ENCODE measurements at regions of chr13 and their contacts with region 1.

Region 1: DNA sequence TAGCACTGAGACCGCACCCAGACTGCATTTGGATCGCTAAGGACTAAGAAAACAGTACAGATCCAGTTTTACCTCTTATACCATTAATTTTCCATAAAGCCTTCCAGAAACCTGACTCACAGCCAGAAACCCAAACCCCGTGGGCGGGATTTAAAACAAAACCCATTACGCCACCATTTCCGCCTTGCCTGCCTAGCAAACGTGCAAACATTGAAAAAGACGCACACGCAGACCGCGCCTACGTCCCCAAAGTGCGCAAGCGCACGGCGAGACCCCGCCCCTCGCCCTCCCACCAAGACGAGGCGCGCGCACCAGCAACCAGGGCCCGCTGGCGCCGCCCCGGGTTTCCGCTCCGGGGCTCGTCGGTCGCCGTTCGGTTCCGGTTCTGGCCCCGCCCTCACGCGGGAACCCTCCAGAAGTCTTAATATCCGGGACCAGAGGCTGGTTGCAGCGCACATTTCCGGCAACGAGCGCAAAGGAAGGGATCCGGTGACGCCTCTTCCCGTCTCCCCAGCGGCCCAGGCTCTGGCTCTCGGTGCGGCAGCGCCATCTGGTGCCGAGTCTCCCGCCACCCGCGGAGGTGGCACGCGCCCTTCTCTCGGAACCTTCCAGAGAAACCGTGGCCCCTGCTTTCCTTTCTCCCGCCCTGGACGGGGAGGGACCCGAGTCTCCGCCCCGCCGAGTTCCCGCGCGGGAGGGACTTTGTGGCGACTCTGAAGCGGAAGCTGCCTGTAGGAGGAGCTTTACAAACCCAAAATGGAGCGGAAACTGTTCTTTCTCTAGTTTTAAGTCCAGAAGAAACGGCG is 256.9 kb upstream of the STARD13 start:
- DNase-seq: peak; percentile 98
- H3K4me3 Mint-ChIP-seq: peak overlapping the region; percentile 80
- H3K27ac Mint-ChIP-seq: peak overlapping the region; percentile 98
- H3K4me1 Mint-ChIP-seq: peaks cover 42% of the 10 kb centered on the region
- H3K27me3 Mint-ChIP-seq: no peaks in the 10 kb centered on the region

Region 2: GRCh38 chr13:32538621-32539246 is 1003.8 kb before region 1 on chr13 and contains the start of gene N4BP2L2:
- intact Hi-C with region 1: loop called (anchors 2 kb)
- DNase-seq: peak; percentile 88
- H3K4me3 Mint-ChIP-seq: peak within 1 kb of the TSS; percentile 93
- H3K27ac Mint-ChIP-seq: peak within 1 kb of the TSS; percentile 98
- H3K4me1 Mint-ChIP-seq: peaks cover 36% of the 10 kb centered on the region
- H3K27me3 Mint-ChIP-seq: no peaks in the 10 kb centered on the region
- total RNA-seq, gene N4BP2L2: 94.3 and 105 TPM in 2 replicates

Region 3: GRCh38 chr13:32905063-32905863 is 637.2 kb before region 1 on chr13:
- intact Hi-C with region 1: loop called (anchors 1 kb)
- DNase-seq: peak; percentile 26
- H3K4me3 Mint-ChIP-seq: peak overlapping the region; percentile 71
- H3K27ac Mint-ChIP-seq: peak overlapping the region; percentile 86
- H3K4me1 Mint-ChIP-seq: peaks cover 35% of the 10 kb centered on the region
- H3K27me3 Mint-ChIP-seq: peaks cover 5% of the 10 kb centered on the region

Region 4: GRCh38 chr13:33146843-33147611 is 395.5 kb before region 1 on chr13:
- intact Hi-C with region 1: loop called (anchors 2 kb)
- DNase-seq: no peak
- H3K4me3 Mint-ChIP-seq: no peak overlapping the region
- H3K27ac Mint-ChIP-seq: peak overlapping the region; percentile 74
- H3K4me1 Mint-ChIP-seq: peaks cover 15% of the 10 kb centered on the region
- H3K27me3 Mint-ChIP-seq: no peaks in the 10 kb centered on the region

Region 5: DNA sequence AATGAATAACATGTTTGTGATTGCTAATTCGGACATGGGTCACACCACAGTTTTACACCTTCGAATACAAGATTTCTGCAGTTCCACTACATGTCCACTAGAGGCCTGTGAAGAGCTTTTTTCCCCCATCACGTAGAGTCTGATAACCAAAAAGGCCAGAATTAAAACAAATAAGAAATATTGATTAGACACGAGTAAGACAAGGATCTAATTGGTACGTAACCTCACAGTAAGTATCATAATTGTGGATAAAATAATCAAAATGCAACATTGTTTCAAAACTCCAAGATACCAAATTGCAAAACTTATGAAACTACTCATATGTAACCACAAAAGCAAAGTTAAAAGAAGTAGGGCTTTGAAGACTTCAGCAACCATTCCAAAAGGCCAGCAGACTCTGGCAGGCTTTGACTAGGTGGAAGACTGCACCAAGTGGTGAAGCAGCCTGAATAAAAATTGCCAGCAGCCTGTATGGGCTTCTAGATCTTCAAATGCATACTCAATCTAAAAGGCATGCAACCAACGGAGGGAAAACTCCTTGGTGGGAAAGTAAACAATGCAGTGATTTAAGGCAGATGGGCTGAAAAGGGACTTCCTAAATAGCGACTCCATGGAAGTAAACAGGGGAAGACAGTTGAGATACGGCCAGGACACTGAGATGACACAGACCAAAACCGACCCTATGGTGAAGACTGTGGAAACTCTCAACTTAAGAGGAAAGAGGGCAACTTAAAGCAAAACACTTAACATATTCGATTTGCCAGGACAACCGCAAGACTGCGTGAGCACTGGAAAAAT is 313.6 kb before region 1 on chr13:
- intact Hi-C with region 1: loop called (anchors 1 kb)
- DNase-seq: no peak
- H3K4me3 Mint-ChIP-seq: no peak overlapping the region
- H3K27ac Mint-ChIP-seq: no peak overlapping the region
- H3K4me1 Mint-ChIP-seq: peaks cover 6% of the 10 kb centered on the region
- H3K27me3 Mint-ChIP-seq: no peaks in the 10 kb centered on the region

Region 6: DNA sequence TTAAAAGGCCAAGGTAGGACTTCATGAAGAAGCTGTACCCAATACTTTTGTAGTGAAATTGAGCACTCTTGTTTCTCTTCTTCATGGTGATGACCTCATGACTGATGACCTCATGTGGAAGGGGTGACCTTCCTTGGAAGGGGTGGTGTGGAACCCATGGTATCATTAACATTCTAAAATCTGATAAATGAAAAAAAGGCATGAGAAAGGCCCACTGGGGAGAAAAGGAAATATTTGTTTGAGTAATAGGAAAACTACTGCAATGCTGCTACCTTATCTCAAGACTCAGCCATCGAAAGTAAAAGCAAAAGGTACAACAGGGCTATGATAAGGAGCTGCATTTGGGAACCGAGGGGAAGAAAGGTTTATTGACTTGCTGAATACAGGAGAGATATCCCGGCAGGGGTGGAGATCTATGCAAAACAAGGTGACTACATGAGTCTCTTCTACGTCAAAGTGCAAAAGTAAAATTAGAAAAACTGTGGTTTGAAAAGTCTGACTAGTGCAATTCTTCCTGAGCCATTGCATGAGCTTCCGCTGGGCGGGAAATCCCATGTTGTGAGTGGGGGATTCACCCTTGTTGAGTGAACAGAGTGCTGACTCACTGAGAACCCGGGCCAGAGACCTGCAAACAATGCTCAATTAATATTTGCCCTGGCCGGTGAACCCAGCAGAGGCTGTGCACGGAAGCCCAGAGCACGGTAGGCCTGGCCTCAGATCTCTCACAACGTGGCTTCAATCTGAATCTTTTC is 136.6 kb after region 1 on chr13:
- intact Hi-C with region 1: loop called (anchors 1 kb)
- DNase-seq: peak; percentile 53
- H3K4me3 Mint-ChIP-seq: peak overlapping the region; percentile 76
- H3K27ac Mint-ChIP-seq: peak overlapping the region; percentile 91
- H3K4me1 Mint-ChIP-seq: peaks cover 46% of the 10 kb centered on the region
- H3K27me3 Mint-ChIP-seq: no peaks in the 10 kb centered on the region

Region 7: DNA sequence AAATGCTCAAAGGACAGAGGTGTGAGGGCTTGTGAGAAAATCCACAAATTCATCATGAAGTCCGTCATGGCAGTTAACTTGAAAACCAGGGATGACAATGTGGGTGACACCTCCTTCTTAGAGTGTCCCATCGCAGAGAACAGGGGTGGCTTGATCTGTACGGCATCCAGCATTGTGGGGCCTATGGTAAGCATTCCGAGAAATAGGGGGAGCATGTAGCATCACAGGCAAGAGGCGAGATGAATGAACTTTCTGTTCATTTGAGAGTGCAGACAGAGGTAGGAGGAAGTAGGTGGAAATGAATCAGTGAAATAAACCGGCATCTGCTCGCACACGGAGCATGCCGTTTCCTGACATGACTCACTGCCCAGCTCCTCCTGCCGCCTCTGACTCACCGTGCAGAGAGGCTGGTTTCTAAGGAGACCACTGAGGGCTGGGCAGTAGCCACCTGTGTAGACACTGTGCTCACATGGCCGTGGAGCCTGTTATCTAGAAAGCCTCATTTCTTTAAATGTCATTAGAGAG is 614.4 kb after region 1 on chr13:
- intact Hi-C with region 1: loop called (anchors 2 kb)
- DNase-seq: peak; percentile 67
- H3K4me3 Mint-ChIP-seq: peak overlapping the region; percentile 70
- H3K27ac Mint-ChIP-seq: peak overlapping the region; percentile 90
- H3K4me1 Mint-ChIP-seq: peaks cover 38% of the 10 kb centered on the region
- H3K27me3 Mint-ChIP-seq: peaks cover 17% of the 10 kb centered on the region